Activated CD4-positive, alpha-beta memory T cell treated with anti-CD3 and anti-CD28 coated beads for 36 hours (primary cell): ENCODE measurements at regions of chr16 and their contacts with region 1.

Region 1: GRCh38 chr16:66521951-66522771 is 27.8 kb downstream of the TK2 start:
- DNase-seq: peak; percentile 99
- H3K4me3 Mint-ChIP-seq: peak overlapping the region; percentile 68
- H3K27ac Mint-ChIP-seq: peak overlapping the region; percentile 96
- H3K4me1 Mint-ChIP-seq: peaks cover 89% of the 10 kb centered on the region
- H3K27me3 Mint-ChIP-seq: no peaks in the 10 kb centered on the region

Region 2: DNA sequence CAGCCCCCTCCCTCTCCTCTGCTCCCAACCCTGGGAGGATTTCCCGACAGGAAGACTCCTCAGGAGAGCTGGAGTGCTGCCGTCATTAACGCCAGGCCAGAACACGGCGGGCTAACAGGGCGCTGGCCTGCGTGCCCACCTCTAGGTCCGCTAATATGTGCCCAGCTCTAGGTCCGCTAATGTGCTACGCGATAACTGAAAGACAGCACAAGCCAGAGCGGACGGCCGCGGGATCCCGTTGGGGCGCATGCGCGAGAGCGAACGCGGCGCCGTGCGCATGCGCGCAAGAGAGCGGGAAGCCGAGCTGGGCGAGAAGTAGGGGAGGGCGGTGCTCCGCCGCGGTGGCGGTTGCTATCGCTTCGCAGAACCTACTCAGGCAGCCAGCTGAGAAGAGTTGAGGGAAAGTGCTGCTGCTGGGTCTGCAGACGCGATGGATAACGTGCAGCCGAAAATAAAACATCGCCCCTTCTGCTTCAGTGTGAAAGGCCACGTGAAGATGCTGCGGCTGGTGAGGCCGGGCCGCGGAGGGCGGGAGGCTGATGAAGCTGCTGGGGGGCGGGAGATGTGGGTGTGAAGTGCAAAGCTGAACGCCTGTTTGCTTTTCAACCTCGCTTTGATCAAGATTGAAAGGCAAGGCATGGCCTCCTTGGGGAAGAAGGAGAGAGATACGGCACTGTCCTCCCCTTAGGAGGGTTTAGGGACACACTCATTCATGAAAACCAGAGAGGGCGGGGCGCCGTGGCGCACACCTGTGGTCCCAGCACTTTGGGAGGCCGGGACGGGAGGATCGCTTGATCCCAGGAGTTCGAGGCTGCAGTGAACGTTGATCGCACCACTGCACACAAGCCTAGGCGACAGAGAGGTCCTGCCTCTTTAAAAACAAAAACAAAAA is 30.4 kb after region 1 on chr16 and contains the start of gene CKLF:
- CTCF ChIA-PET with region 1: interaction called, 34 read pairs
- POLR2A ChIA-PET with region 1: interaction called, 26 read pairs
- intact Hi-C with region 1: loop called (anchors 1 kb)
- DNase-seq: peak; percentile 95
- H3K4me3 Mint-ChIP-seq: peak within 1 kb of the TSS; percentile 95
- H3K27ac Mint-ChIP-seq: peak within 1 kb of the TSS; percentile 96
- H3K4me1 Mint-ChIP-seq: peaks cover 65% of the 10 kb centered on the region
- H3K27me3 Mint-ChIP-seq: peaks cover 2% of the 10 kb centered on the region
- total RNA-seq, gene CKLF: 167 to 173 TPM

Region 3: GRCh38 chr16:66562407-66562806 is 40.2 kb after region 1 on chr16:
- CTCF ChIA-PET with region 1: interaction called, 35 read pairs
- POLR2A ChIA-PET with region 1: interaction called, 27 read pairs
- intact Hi-C with region 1: loop called (anchors 1 kb)
- DNase-seq: no peak
- H3K4me3 Mint-ChIP-seq: no peak overlapping the region
- H3K27ac Mint-ChIP-seq: no peak overlapping the region
- H3K4me1 Mint-ChIP-seq: peaks cover 71% of the 10 kb centered on the region
- H3K27me3 Mint-ChIP-seq: no peaks in the 10 kb centered on the region

Region 4: DNA sequence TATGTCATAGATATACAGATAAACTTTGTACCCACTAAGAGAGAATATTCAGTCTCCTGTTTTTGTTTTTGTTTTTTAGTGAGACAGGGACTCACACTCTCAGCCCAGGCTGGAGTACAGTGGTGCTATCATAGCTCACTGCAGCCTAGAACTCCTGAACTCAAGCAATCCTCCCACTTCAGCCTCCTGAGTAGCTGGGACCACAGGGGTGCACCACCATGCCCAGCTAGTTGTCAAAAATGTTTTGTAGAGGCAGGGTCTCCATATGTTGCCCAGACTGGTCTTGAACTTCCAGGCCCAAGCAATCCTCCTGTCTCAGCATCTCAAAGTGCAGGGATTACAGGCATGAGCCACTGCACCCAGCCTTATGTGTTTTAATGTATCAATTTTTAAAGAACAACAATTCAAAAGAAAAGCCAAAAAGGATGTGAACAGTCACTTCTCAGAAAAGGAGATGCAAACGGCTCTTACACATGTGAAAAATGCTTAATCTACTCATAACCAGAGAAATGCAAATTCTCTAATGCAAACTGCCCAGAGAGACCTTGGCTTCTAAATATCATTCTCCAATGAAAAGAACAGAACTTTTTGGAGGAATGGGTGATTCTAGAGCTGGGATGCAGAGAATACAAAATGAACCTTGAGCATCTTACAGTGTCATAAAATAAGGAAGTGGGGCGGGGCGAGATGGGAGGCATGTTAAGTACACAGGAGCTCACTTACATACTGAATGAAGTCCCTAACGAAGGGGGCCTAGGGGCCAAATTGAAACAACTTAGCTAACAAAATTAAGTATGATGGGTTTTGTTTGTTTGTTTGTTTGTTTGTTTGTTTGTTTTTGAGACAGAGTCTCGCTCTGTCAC is 75.1 kb after region 1 on chr16:
- CTCF ChIA-PET with region 1: no interaction called
- POLR2A ChIA-PET with region 1: interaction called, 4 read pairs
- intact Hi-C with region 1: loop called (anchors 2 kb)
- DNase-seq: peak; percentile 37
- H3K4me3 Mint-ChIP-seq: no peak overlapping the region
- H3K27ac Mint-ChIP-seq: peak overlapping the region; percentile 92
- H3K4me1 Mint-ChIP-seq: peaks cover 34% of the 10 kb centered on the region
- H3K27me3 Mint-ChIP-seq: no peaks in the 10 kb centered on the region